ENCODE measurements at regions of chr3 and their contacts with region 1.

Region 1: GRCh38 chr3:143644370-143645089 is 203.7 kb downstream of the SLC9A9 start:
- DNase-seq: peak; percentile 81
- H3K4me3 ChIP-seq: no peak overlapping the region
- H3K27ac ChIP-seq: no peak overlapping the region
- H3K4me1 ChIP-seq: peaks cover 5% of the 10 kb centered on the region
- H3K27me3 ChIP-seq: no peaks in the 10 kb centered on the region
- CTCF ChIP-seq: peak; percentile 74

Region 2: GRCh38 chr3:143329567-143330211 is 314.8 kb before region 1 on chr3:
- CTCF ChIA-PET with region 1: no interaction called
- POLR2A ChIA-PET with region 1: no interaction called
- intact Hi-C with region 1: loop called (anchors 5 kb)
- DNase-seq: no peak
- H3K4me3 ChIP-seq: no peak overlapping the region
- H3K27ac ChIP-seq: peak overlapping the region; percentile 70
- H3K4me1 ChIP-seq: peaks cover 57% of the 10 kb centered on the region
- H3K27me3 ChIP-seq: no peaks in the 10 kb centered on the region
- CTCF ChIP-seq: no peak

Region 3: DNA sequence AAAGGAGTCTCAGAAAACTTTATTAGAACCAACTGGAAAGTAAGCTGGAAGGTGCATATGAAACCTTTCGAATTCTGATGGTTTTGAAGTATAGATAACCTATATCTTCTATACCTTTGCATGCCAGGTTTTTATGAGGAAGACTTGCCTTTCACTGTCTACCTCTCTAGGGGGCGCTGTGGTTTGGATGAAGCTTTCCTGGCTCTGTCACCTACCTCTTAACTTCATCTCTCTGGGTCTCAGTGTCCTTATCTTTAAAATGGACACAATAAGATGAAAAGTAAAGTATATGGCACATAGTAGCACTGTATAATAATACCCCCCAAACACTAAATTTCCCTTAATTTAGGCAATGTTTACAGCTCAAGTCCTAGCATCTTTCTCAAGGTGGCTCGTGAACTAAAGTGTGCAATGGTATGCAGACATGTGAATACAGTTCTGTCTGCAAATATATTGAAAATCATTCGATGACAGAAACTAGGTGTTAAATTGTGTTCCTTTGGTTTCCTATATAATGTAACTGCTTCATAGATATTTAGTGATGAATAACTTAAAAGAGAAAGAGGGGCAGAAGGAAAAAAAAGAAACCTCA is 210.6 kb before region 1 on chr3:
- CTCF ChIA-PET with region 1: no interaction called
- POLR2A ChIA-PET with region 1: no interaction called
- intact Hi-C with region 1: loop called (anchors 2 kb)
- DNase-seq: peak; percentile 41
- H3K4me3 ChIP-seq: no peak overlapping the region
- H3K27ac ChIP-seq: no peak overlapping the region
- H3K4me1 ChIP-seq: no peaks in the 10 kb centered on the region
- H3K27me3 ChIP-seq: no peaks in the 10 kb centered on the region
- CTCF ChIP-seq: peak; percentile 70

Measured in A673 (cell line).